Activated CD4-positive, alpha-beta T cell treated with anti-CD3 and anti-CD28 coated beads for 36 hours (primary cell): ENCODE measurements at regions of chr16 and their contacts with region 1.

Region 1: GRCh38 chr16:3503523-3503922 is 2.7 kb downstream of the CLUAP1 start:
- DNase-seq: peak; percentile 77
- ATAC-seq: peak; percentile 60
- H3K4me3 Mint-ChIP-seq: peak overlapping the region; percentile 65
- H3K27ac Mint-ChIP-seq: peak overlapping the region; percentile 91
- H3K4me1 Mint-ChIP-seq: peaks cover 62% of the 10 kb centered on the region
- H3K27me3 Mint-ChIP-seq: no peaks in the 10 kb centered on the region

Region 2: GRCh38 chr16:3065069-3065741 is 438.3 kb before region 1 on chr16 and contains the start of gene IL32:
- CTCF ChIA-PET with region 1: no interaction called
- POLR2A ChIA-PET with region 1: no interaction called
- intact Hi-C with region 1: loop called in 1 of 2 experiments (anchors 5 kb)
- DNase-seq: peak; percentile 90
- ATAC-seq: peak; percentile 62
- H3K4me3 Mint-ChIP-seq: peak within 1 kb of the TSS; percentile 100
- H3K27ac Mint-ChIP-seq: peak within 1 kb of the TSS; percentile 100
- H3K4me1 Mint-ChIP-seq: peaks cover 64% of the 10 kb centered on the region
- H3K27me3 Mint-ChIP-seq: no peaks in the 10 kb centered on the region
- total RNA-seq, gene IL32: 1,864 to 2,360 TPM

Region 3: GRCh38 chr16:3182608-3183444 is 320.7 kb before region 1 on chr16:
- CTCF ChIA-PET with region 1: no interaction called
- POLR2A ChIA-PET with region 1: no interaction called
- intact Hi-C with region 1: loop called (anchors 2 kb)
- DNase-seq: peak; percentile 77
- ATAC-seq: peak; percentile 51
- H3K4me3 Mint-ChIP-seq: peak overlapping the region; percentile 60
- H3K27ac Mint-ChIP-seq: peak overlapping the region; percentile 79
- H3K4me1 Mint-ChIP-seq: peaks cover 24% of the 10 kb centered on the region
- H3K27me3 Mint-ChIP-seq: peaks cover 69% of the 10 kb centered on the region

Region 4: DNA sequence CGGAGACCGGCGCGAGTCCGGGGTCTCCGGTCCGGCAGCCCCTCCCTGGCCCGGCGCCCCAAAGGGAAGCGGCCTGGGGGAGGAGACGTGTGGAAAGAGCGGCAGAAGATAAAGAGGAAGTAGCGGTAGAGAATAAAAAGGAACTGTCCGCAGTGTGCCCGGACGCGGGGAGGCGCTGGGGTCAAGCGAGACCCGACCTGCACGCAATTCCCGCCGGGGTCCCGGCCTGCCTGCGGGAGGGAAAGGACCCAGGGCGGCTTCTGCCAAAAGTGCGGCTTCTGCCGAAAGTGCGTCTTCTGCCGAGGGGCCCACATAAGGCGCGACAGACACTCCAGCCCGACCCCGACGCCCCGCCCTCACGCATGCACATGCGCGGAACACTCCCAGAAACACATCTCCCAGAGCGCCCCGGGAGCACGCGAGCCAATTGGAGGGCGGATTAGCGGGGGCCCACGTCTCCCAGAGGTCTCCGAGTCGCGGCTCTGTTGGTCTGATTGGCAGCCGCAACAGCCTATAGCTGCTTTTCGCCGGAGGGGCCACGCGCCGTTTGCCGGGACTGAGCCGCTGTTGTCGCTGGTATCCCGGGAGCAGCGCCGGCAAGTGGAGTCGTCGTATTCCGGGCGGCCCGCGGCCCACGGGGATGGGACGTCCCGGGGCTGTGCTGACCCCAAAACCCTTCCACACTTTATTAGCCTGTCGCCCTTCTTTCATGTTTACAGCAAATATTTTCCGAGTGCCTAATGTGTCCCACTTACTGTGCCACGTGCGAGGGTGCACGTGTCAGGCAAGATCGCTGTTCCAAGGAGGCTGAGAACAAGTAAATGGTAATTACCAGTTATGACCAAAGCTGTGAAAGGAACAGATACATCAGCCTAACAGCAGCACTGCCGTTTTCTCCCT is 239.1 kb before region 1 on chr16:
- CTCF ChIA-PET with region 1: no interaction called
- POLR2A ChIA-PET with region 1: no interaction called
- intact Hi-C with region 1: loop called in 1 of 2 experiments (anchors 2 kb)
- DNase-seq: peak; percentile 99
- ATAC-seq: peak; percentile 95
- H3K4me3 Mint-ChIP-seq: peak overlapping the region; percentile 83
- H3K27ac Mint-ChIP-seq: peak overlapping the region; percentile 90
- H3K4me1 Mint-ChIP-seq: peaks cover 25% of the 10 kb centered on the region
- H3K27me3 Mint-ChIP-seq: no peaks in the 10 kb centered on the region

Region 5: GRCh38 chr16:3400779-3401688 is 102.5 kb before region 1 on chr16 and contains the starts of genes ZNF174 and ZSCAN32:
- CTCF ChIA-PET with region 1: no interaction called
- POLR2A ChIA-PET with region 1: interaction called, 3 read pairs
- intact Hi-C with region 1: loop called in 1 of 2 experiments (anchors 1 kb)
- DNase-seq: peak; percentile 99
- ATAC-seq: peak; percentile 99
- H3K4me3 Mint-ChIP-seq: peak within 1 kb of the TSS; percentile 91
- H3K27ac Mint-ChIP-seq: peak within 1 kb of the TSS; percentile 83
- H3K4me1 Mint-ChIP-seq: peaks cover 49% of the 10 kb centered on the region
- H3K27me3 Mint-ChIP-seq: no peaks in the 10 kb centered on the region
- total RNA-seq, gene ZNF174: 7.4 to 9.5 TPM
- total RNA-seq, gene ZSCAN32: 15.7 to 17.4 TPM

Region 6: GRCh38 chr16:3457434-3458252 is 45.9 kb before region 1 on chr16:
- CTCF ChIA-PET with region 1: no interaction called
- POLR2A ChIA-PET with region 1: no interaction called
- intact Hi-C with region 1: loop called (anchors 2 kb)
- DNase-seq: peak; percentile 93
- ATAC-seq: peak; percentile 86
- H3K4me3 Mint-ChIP-seq: peak overlapping the region; percentile 74
- H3K27ac Mint-ChIP-seq: peak overlapping the region; percentile 83
- H3K4me1 Mint-ChIP-seq: peaks cover 41% of the 10 kb centered on the region
- H3K27me3 Mint-ChIP-seq: no peaks in the 10 kb centered on the region